ENCODE measurements at regions of chr6 and their contacts with region 1.

Region 1: GRCh38 chr6:122471107-122472021 is at the start of gene SERINC1:
- DNase-seq: peak; percentile 86
- H3K4me3 Mint-ChIP-seq: peak within 1 kb of the TSS; percentile 100
- H3K27ac Mint-ChIP-seq: peak within 1 kb of the TSS; percentile 100
- H3K4me1 Mint-ChIP-seq: peaks cover 25% of the 10 kb centered on the region
- H3K27me3 Mint-ChIP-seq: peaks cover 2% of the 10 kb centered on the region
- total RNA-seq, gene SERINC1: 43.1 and 47.5 TPM in 2 replicates

Region 2: DNA sequence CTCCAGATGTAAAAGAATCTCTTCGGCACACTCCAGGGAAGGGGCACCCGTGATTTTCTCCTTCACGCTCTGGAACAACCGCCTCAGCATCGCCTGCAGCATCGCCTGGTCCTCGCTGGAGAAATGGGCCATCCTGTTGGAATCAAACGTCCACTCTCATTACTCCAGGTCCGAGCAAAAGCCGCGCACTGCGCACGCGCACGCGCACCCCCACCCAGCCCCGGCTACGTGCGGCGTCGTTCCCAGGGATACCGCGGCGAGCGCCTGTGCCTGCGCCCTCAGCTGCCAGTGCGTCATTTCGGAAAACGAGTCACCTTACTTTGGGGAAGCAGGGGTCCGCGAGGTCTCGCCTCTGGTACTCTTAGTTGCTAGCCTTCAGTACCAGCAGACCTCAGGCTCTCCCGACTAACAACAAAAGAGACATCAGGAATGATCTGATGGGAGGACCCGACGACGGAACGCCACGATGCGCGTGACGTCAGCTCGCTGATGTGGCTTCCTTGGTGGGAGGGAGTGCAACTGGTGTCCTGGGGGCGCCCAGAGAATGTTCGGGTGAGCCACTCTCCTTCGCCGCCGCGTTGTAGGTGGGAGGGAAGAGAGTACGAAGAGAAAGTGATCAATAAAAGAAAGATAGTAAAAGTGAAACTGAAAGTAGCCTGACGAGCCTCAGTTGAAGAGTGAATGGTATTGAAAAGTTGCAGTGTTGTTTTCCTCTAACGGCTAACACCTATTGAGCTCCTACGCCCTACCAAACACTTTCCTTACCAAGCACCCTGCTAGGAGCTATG is 1136.9 kb before region 1 on chr6 and contains the start of gene TBC1D32:
- intact Hi-C with region 1: loop called (anchors 10 kb)
- DNase-seq: peak; percentile 83
- H3K4me3 Mint-ChIP-seq: peak within 1 kb of the TSS; percentile 95
- H3K27ac Mint-ChIP-seq: peak within 1 kb of the TSS; percentile 99
- H3K4me1 Mint-ChIP-seq: peaks cover 31% of the 10 kb centered on the region
- H3K27me3 Mint-ChIP-seq: peaks cover 3% of the 10 kb centered on the region
- total RNA-seq, gene TBC1D32: 6.8 and 7.9 TPM in 2 replicates

Region 3: GRCh38 chr6:122399384-122400158 is 71.8 kb before region 1 on chr6 and contains the start of gene HSF2:
- intact Hi-C with region 1: loop called (anchors 1 kb)
- DNase-seq: peak; percentile 91
- H3K4me3 Mint-ChIP-seq: peak within 1 kb of the TSS; percentile 98
- H3K27ac Mint-ChIP-seq: peak within 1 kb of the TSS; percentile 98
- H3K4me1 Mint-ChIP-seq: peaks cover 41% of the 10 kb centered on the region
- H3K27me3 Mint-ChIP-seq: no peaks in the 10 kb centered on the region
- total RNA-seq, gene HSF2: 14.7 and 15.3 TPM in 2 replicates

Region 4: GRCh38 chr6:122459213-122459612 is 12.2 kb before region 1 on chr6:
- intact Hi-C with region 1: loop called (anchors 2 kb)
- DNase-seq: no peak
- H3K4me3 Mint-ChIP-seq: no peak overlapping the region
- H3K27ac Mint-ChIP-seq: no peak overlapping the region
- H3K4me1 Mint-ChIP-seq: peaks cover 46% of the 10 kb centered on the region
- H3K27me3 Mint-ChIP-seq: no peaks in the 10 kb centered on the region

Region 5: DNA sequence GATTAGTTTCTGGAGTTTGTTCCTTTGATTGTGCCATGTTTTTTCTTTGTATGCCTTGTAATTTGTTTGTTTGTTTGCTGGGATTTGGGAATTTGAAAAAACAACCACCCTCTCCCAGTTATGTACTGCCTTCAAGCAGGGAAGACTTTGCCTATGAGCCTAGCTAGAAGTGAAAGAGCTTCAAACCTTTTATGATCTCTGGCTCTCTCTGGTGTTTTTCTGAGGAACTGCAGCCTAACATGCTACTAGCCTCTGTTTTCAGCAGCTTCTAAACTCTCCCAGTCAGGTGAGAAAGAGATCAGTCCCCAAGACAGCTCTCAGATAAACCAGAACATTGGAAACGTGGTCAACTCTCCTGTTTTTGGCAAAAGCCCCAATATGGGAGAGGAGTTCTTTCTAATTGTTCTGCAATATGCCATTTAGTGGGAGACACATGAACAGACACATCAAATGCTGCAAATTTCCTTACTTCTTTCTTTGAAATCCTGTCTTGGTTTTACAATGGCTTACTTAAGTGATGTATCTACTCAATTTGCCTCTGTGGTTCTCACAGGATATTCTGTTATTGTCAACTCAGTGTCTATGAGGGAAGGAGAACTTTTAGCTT is 59.2 kb after region 1 on chr6:
- intact Hi-C with region 1: loop called (anchors 1 kb)
- DNase-seq: peak; percentile 50
- H3K4me3 Mint-ChIP-seq: no peak overlapping the region
- H3K27ac Mint-ChIP-seq: no peak overlapping the region
- H3K4me1 Mint-ChIP-seq: no peaks in the 10 kb centered on the region
- H3K27me3 Mint-ChIP-seq: peaks cover 28% of the 10 kb centered on the region

Region 6: GRCh38 chr6:122977180-122977579 is 505.8 kb after region 1 on chr6:
- intact Hi-C with region 1: no loop called
- DNase-seq: no peak
- H3K4me3 Mint-ChIP-seq: no peak overlapping the region
- H3K27ac Mint-ChIP-seq: no peak overlapping the region
- H3K4me1 Mint-ChIP-seq: no peaks in the 10 kb centered on the region
- H3K27me3 Mint-ChIP-seq: no peaks in the 10 kb centered on the region